ENCODE measurements at regions of chr2 and their contacts with region 1.

Region 1: GRCh38 chr2:232327105-232328041 is 51.2 kb upstream of the ALPP start:
- DNase-seq: peak; percentile 74 to 94 (median 82)
- ATAC-seq: peak; percentile 88
- H3K4me3 ChIP-seq: no peak overlapping the region
- H3K4me3 Mint-ChIP-seq: no peak overlapping the region
- H3K27ac ChIP-seq: no peak overlapping the region
- H3K27ac Mint-ChIP-seq: no peak overlapping the region
- H3K4me1 ChIP-seq: peaks cover 28% of the 10 kb centered on the region
- H3K4me1 Mint-ChIP-seq: peaks cover 31% of the 10 kb centered on the region
- H3K27me3 ChIP-seq: no peaks in the 10 kb centered on the region
- H3K27me3 Mint-ChIP-seq: no peaks in the 10 kb centered on the region
- CTCF ChIP-seq: peak; percentile 95

Region 2: DNA sequence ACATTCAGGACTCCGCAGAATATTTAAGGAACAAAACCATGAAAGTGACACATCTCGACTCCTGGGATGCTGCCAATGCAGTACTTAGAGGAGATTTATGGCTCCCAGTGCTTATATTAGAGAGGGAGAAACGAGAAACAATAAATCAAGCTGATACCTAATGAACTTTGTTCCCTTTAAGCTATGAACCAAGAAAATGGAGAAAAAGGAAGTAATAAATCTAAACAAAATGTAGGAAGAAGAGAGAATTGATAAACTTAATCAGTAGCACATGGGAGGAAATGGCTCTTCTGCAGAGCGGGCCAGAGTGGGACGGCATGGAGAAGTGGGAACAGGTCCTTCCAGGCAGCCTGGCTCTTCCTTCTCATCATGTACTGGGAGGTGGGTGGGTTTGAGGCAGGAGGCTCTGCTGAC is 443.9 kb before region 1 on chr2:
- CTCF ChIA-PET with region 1: no interaction called
- POLR2A ChIA-PET with region 1: no interaction called
- intact Hi-C with region 1: no loop called
- DNase-seq: no peak
- ATAC-seq: no peak
- H3K4me3 ChIP-seq: no peak overlapping the region
- H3K4me3 Mint-ChIP-seq: no peak overlapping the region
- H3K27ac ChIP-seq: no peak overlapping the region
- H3K27ac Mint-ChIP-seq: no peak overlapping the region
- H3K4me1 ChIP-seq: no peaks in the 10 kb centered on the region
- H3K4me1 Mint-ChIP-seq: no peaks in the 10 kb centered on the region
- H3K27me3 ChIP-seq: peaks cover 2% of the 10 kb centered on the region in 2 experiments
- H3K27me3 Mint-ChIP-seq: peaks cover 47% of the 10 kb centered on the region
- CTCF ChIP-seq: no peak

Region 3: GRCh38 chr2:231925303-231926179 is 401.8 kb before region 1 on chr2:
- CTCF ChIA-PET with region 1: interaction called, 112 read pairs
- POLR2A ChIA-PET with region 1: interaction called, 3 read pairs
- intact Hi-C with region 1: loop called (anchors 1 kb)
- DNase-seq: peak; percentile 46 to 85 (median 68)
- ATAC-seq: peak; percentile 62
- H3K4me3 ChIP-seq: peak overlapping the region; percentile 35 to 66
- H3K4me3 Mint-ChIP-seq: peak overlapping the region; percentile 76
- H3K27ac ChIP-seq: no peak overlapping the region
- H3K27ac Mint-ChIP-seq: no peak overlapping the region
- H3K4me1 ChIP-seq: peaks cover 16% of the 10 kb centered on the region
- H3K4me1 Mint-ChIP-seq: peaks cover 11% of the 10 kb centered on the region
- H3K27me3 ChIP-seq: peaks cover 7 to 11% of the 10 kb centered on the region in 2 experiments
- H3K27me3 Mint-ChIP-seq: peaks cover 33% of the 10 kb centered on the region
- CTCF ChIP-seq: peak; percentile 73

Region 4: GRCh38 chr2:232230557-232230956 is 96.8 kb before region 1 on chr2:
- CTCF ChIA-PET with region 1: no interaction called
- POLR2A ChIA-PET with region 1: no interaction called
- intact Hi-C with region 1: loop called in 1 of 2 experiments (anchors 10 kb)
- DNase-seq: peak in 1 of 9 experiments; percentile 8
- ATAC-seq: no peak
- H3K4me3 ChIP-seq: no peak overlapping the region
- H3K4me3 Mint-ChIP-seq: no peak overlapping the region
- H3K27ac ChIP-seq: no peak overlapping the region
- H3K27ac Mint-ChIP-seq: no peak overlapping the region
- H3K4me1 ChIP-seq: no peaks in the 10 kb centered on the region
- H3K4me1 Mint-ChIP-seq: peaks cover 11% of the 10 kb centered on the region
- H3K27me3 ChIP-seq: no peaks in the 10 kb centered on the region
- H3K27me3 Mint-ChIP-seq: no peaks in the 10 kb centered on the region
- CTCF ChIP-seq: no peak

Region 5: DNA sequence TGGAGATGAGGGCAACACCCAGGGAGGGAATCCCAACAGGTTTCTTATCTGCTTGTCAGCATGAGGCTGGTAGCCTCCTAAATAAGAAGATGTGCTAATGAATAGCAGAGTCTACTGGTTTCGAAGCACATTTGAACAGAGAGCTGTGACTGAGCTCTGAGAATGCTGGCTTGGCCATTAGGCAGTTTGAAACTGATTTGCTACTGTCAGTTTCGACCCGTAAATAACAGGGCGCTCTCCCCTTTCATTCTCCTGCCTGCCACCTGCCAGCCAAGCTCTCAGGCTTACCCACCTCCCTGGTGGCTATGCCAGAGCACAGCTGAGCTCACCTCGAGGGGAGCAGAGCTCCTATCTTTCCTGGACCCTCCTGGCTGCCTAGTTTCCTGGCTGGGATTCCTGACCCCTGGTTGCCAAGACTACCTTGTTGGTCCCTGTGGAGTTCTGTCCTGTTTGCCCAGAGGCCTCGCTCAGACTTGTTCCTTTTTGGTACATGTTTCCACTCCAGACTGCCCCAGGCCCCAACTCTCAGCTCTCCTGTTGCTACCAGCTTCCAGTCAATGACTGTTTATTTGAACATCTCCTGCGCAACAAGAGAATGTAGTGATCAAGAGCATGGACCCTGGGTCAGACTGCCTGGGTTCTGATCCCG is 51.2 kb before region 1 on chr2:
- CTCF ChIA-PET with region 1: interaction called, 4 read pairs
- POLR2A ChIA-PET with region 1: no interaction called
- intact Hi-C with region 1: loop called in 1 of 2 experiments (anchors 10 kb)
- DNase-seq: no peak
- ATAC-seq: no peak
- H3K4me3 ChIP-seq: no peak overlapping the region
- H3K4me3 Mint-ChIP-seq: no peak overlapping the region
- H3K27ac ChIP-seq: no peak overlapping the region
- H3K27ac Mint-ChIP-seq: no peak overlapping the region
- H3K4me1 ChIP-seq: no peaks in the 10 kb centered on the region
- H3K4me1 Mint-ChIP-seq: peaks cover 9% of the 10 kb centered on the region
- H3K27me3 ChIP-seq: no peaks in the 10 kb centered on the region
- H3K27me3 Mint-ChIP-seq: no peaks in the 10 kb centered on the region
- CTCF ChIP-seq: no peak

Region 6: GRCh38 chr2:232292395-232293154 is 34.8 kb before region 1 on chr2:
- CTCF ChIA-PET with region 1: interaction called, 68 read pairs
- POLR2A ChIA-PET with region 1: no interaction called
- intact Hi-C with region 1: loop called (anchors 2 to 5 kb)
- DNase-seq: peak in 7 of 9 experiments; percentile 31 to 67 (median 53)
- ATAC-seq: peak; percentile 62
- H3K4me3 ChIP-seq: no peak overlapping the region
- H3K4me3 Mint-ChIP-seq: no peak overlapping the region
- H3K27ac ChIP-seq: no peak overlapping the region
- H3K27ac Mint-ChIP-seq: no peak overlapping the region
- H3K4me1 ChIP-seq: peaks cover 23% of the 10 kb centered on the region
- H3K4me1 Mint-ChIP-seq: peaks cover 26% of the 10 kb centered on the region
- H3K27me3 ChIP-seq: no peaks in the 10 kb centered on the region
- H3K27me3 Mint-ChIP-seq: no peaks in the 10 kb centered on the region
- CTCF ChIP-seq: peak; percentile 53

Region 7: GRCh38 chr2:232339121-232340081 is 12.0 kb after region 1 on chr2:
- CTCF ChIA-PET with region 1: interaction called, 13 read pairs
- POLR2A ChIA-PET with region 1: no interaction called
- intact Hi-C with region 1: no loop called
- DNase-seq: no peak
- ATAC-seq: no peak
- H3K4me3 ChIP-seq: no peak overlapping the region
- H3K4me3 Mint-ChIP-seq: no peak overlapping the region
- H3K27ac ChIP-seq: no peak overlapping the region
- H3K27ac Mint-ChIP-seq: peak overlapping the region; percentile 55
- H3K4me1 ChIP-seq: peaks cover 5% of the 10 kb centered on the region
- H3K4me1 Mint-ChIP-seq: peaks cover 9% of the 10 kb centered on the region
- H3K27me3 ChIP-seq: no peaks in the 10 kb centered on the region
- H3K27me3 Mint-ChIP-seq: no peaks in the 10 kb centered on the region
- CTCF ChIP-seq: no peak

Region 8: GRCh38 chr2:232511336-232511888 is 184.0 kb after region 1 on chr2:
- CTCF ChIA-PET with region 1: no interaction called
- POLR2A ChIA-PET with region 1: no interaction called
- intact Hi-C with region 1: no loop called
- DNase-seq: no peak
- ATAC-seq: no peak
- H3K4me3 ChIP-seq: no peak overlapping the region
- H3K4me3 Mint-ChIP-seq: no peak overlapping the region
- H3K27ac ChIP-seq: no peak overlapping the region
- H3K27ac Mint-ChIP-seq: no peak overlapping the region
- H3K4me1 ChIP-seq: no peaks in the 10 kb centered on the region
- H3K4me1 Mint-ChIP-seq: no peaks in the 10 kb centered on the region
- H3K27me3 ChIP-seq: no peaks in the 10 kb centered on the region
- H3K27me3 Mint-ChIP-seq: peaks cover 18% of the 10 kb centered on the region
- CTCF ChIP-seq: no peak

Measured in CD8-positive, alpha-beta T cell (primary cell).